ENCODE measurements at regions of chr2 and their contacts with region 1.

Region 1: GRCh38 chr2:106073678-106074406 is 120.3 kb downstream of the UXS1 start:
- DNase-seq: no peak
- H3K4me3 ChIP-seq: no peak overlapping the region
- H3K27ac ChIP-seq: no peak overlapping the region
- H3K4me1 ChIP-seq: no peaks in the 10 kb centered on the region
- H3K27me3 ChIP-seq: peaks cover 29% of the 10 kb centered on the region; the same call in 1 of the 2 replicates

Region 2: GRCh38 chr2:105576440-105577252 is 497.2 kb before region 1 on chr2:
- in situ Hi-C with region 1: loop called (anchors 10 kb)
- DNase-seq: peak; percentile 79
- H3K4me3 ChIP-seq: no peak overlapping the region
- H3K27ac ChIP-seq: peak overlapping the region; percentile 34
- H3K4me1 ChIP-seq: no peaks in the 10 kb centered on the region; the same call in 1 of the 2 replicates
- H3K27me3 ChIP-seq: no peaks in the 10 kb centered on the region; the same call in 1 of the 2 replicates

Region 3: DNA sequence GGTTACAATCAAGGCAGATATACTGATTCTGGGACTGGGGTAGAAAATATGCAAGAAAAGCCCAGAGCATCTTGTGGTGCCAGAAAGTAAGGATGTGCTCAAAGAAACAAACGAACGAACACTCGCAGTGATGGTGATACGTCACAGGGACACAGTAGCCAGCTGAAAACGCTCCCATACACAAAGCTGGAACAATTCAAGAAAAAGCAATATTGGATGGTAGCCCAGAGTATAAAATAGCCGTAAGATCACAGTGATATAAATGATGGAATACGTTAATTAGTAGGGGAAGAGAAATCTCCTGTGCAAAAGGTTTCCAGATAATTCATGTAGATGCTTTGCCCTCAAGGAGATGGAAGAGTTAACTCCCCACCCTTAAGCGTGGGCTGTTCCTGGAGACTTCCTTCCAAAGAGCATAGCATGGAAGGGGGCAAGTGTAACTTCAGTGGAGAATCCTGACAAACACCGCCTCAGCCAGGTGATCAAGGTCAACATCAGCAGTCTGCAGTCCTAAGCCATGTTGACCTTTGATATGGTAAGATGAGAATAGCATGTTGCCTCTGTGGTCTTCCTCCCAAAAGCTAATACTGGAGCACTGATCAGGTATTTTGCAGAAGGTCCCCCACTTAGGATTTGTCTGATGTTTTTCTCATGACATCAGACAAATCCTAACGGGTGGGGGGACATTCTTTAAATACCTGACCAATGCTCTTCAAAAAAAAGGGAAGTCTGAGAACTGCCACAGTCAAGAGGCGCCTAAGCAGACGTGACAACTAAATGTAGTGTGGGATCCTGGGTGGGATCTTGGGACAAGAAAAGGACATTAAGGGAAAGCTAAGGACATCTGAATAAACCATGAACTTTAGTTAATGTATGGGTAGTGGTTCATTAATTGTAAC is 230.1 kb before region 1 on chr2:
- in situ Hi-C with region 1: no loop called
- DNase-seq: no peak
- H3K4me3 ChIP-seq: no peak overlapping the region
- H3K27ac ChIP-seq: no peak overlapping the region
- H3K4me1 ChIP-seq: no peaks in the 10 kb centered on the region
- H3K27me3 ChIP-seq: no peaks in the 10 kb centered on the region